Activated T-helper 1 cell treated with anti-CD3 and anti-CD28 coated beads, Interleukin-12 subunit alpha, Interleukin-12 subunit beta, Interleukin-2, Interleukin-4 antibody, amounts not matched to agents 30 ng/mL and 10 ng/mL and 1 ng/mL, durations not matched to agents 14 hours and 24 hours and 36 hours (primary cell): ENCODE measurements at regions of chr5 and their contacts with region 1.

Region 1: DNA sequence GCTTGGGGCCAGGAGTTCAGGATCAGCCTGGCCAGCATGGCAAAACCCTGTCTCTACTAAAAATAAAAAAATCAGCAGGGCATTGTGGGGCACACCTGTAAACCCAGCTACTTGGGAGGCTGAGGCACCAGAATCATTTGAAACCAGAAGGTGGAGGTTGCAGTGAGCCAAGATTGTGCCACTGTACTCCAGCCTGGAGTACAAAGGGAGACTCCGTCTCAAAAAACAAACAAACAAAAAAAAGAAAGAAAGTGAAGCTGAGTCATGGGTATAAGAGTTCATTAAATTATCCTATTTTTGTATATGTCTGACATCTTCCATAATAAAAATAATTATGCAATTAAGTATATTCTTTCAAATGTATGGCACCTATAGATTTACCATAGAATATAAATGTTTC is 37.2 kb downstream of the CHD1 start:
- DNase-seq: no peak
- H3K4me3 Mint-ChIP-seq: no peak overlapping the region
- H3K27ac Mint-ChIP-seq: no peak overlapping the region
- H3K4me1 Mint-ChIP-seq: no peaks in the 10 kb centered on the region
- H3K27me3 Mint-ChIP-seq: no peaks in the 10 kb centered on the region

Region 2: DNA sequence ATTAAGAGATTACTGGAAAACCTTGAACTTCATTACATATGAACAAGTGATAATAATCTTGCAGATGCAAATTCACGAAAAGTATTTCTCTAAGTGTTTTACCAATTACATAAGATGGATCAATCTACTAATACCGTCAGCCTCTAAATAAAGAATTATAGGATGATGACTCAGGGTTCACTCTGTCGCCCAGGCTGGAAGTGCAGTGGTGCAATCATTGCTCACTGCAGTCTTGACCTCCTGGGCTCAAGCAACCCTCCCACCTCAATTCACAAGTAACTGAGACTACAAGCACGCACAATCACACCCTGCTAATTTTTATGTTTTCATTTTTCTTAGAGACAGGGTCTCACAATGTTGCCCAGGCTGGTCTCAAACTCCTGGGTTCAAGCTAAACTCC is 18.9 kb before region 1 on chr5:
- intact Hi-C with region 1: loop called (anchors 2 kb)
- DNase-seq: no peak
- H3K4me3 Mint-ChIP-seq: no peak overlapping the region
- H3K27ac Mint-ChIP-seq: no peak overlapping the region
- H3K4me1 Mint-ChIP-seq: peaks cover 6% of the 10 kb centered on the region
- H3K27me3 Mint-ChIP-seq: no peaks in the 10 kb centered on the region